Left ventricle myocardium inferior (tissue), 1 donor: ENCODE measurements at regions of chr1 and their contacts with region 1.

Region 1: GRCh38 chr1:62407405-62408009 is 29.3 kb upstream of the USP1 start:
- DNase-seq: no peak
- H3K4me3 ChIP-seq: no peak overlapping the region
- H3K27ac ChIP-seq: no peak overlapping the region
- H3K4me1 ChIP-seq: no peaks in the 10 kb centered on the region
- H3K27me3 ChIP-seq: peaks cover 18% of the 10 kb centered on the region
- CTCF ChIP-seq: peak; percentile 84

Region 2: GRCh38 chr1:62144238-62144831 is 263.2 kb before region 1 on chr1:
- intact Hi-C with region 1: no loop called
- DNase-seq: no peak
- H3K4me3 ChIP-seq: no peak overlapping the region
- H3K27ac ChIP-seq: no peak overlapping the region
- H3K4me1 ChIP-seq: peaks cover 18% of the 10 kb centered on the region
- H3K27me3 ChIP-seq: no peaks in the 10 kb centered on the region
- CTCF ChIP-seq: peak; percentile 73

Region 3: GRCh38 chr1:62175568-62176179 is 231.8 kb before region 1 on chr1:
- intact Hi-C with region 1: loop called (anchors 2 kb)
- DNase-seq: no peak
- H3K4me3 ChIP-seq: no peak overlapping the region
- H3K27ac ChIP-seq: no peak overlapping the region
- H3K4me1 ChIP-seq: peaks cover 8% of the 10 kb centered on the region
- H3K27me3 ChIP-seq: peaks cover 5% of the 10 kb centered on the region
- CTCF ChIP-seq: peak; percentile 82